Thyroid gland (tissue), 4 donors: ENCODE measurements at regions of chr20 and their contacts with region 1.

Region 1: GRCh38 chr20:3632311-3633004 is 30.7 kb downstream of the GFRA4 start:
- DNase-seq: no peak
- H3K4me3 ChIP-seq: no peak overlapping the region
- H3K27ac ChIP-seq: no peak overlapping the region
- H3K4me1 ChIP-seq: peaks cover 0 to 7% of the 10 kb centered on the region in 2 donors
- H3K27me3 ChIP-seq: no peaks in the 10 kb centered on the region
- CTCF ChIP-seq: peak in 4 of 6 experiments; percentile 25 to 48 (median 36)
- POLR2A ChIP-seq: no peak

Region 2: GRCh38 chr20:3563548-3564177 is 68.8 kb before region 1 on chr20:
- intact Hi-C with region 1: loop called (anchors 5 kb)
- DNase-seq: no peak
- H3K4me3 ChIP-seq: no peak overlapping the region
- H3K27ac ChIP-seq: no peak overlapping the region
- H3K4me1 ChIP-seq: no peaks in the 10 kb centered on the region
- H3K27me3 ChIP-seq: no peaks in the 10 kb centered on the region
- CTCF ChIP-seq: peak in 5 of 6 experiments; percentile 34 to 84 (median 75)
- POLR2A ChIP-seq: no peak